SK-N-SH (cell line): ENCODE measurements at regions of chr17 and their contacts with region 1.

Region 1: GRCh38 chr17:58417300-58418092 is at the start of gene RNF43:
- DNase-seq: peak; percentile 90
- H3K4me3 ChIP-seq: peak within 1 kb of the TSS; percentile 33 to 50
- H3K27ac ChIP-seq: no peak within 1 kb of the TSS
- H3K4me1 ChIP-seq: peaks cover 0 to 6% of the 10 kb centered on the region in 2 experiments; a peak in 2 of 4 replicates
- H3K27me3 ChIP-seq: peaks cover 20% of the 10 kb centered on the region
- CTCF ChIP-seq: peak; percentile 79
- EP300 ChIP-seq: no peak
- RAD21 ChIP-seq: peak; percentile 87
- polyA plus RNA-seq, gene RNF43: not detected in 2 replicates

Region 2: GRCh38 chr17:58200017-58200633 is 217.4 kb before region 1 on chr17:
- CTCF ChIA-PET with region 1: interaction called, 14 read pairs
- POLR2A ChIA-PET with region 1: no interaction called
- DNase-seq: peak; percentile 89
- H3K4me3 ChIP-seq: peak overlapping the region in 1 of 2 experiments; percentile 11; a peak in 2 of 4 replicates
- H3K27ac ChIP-seq: no peak overlapping the region
- H3K4me1 ChIP-seq: peaks cover 0 to 4% of the 10 kb centered on the region in 2 experiments; a peak in 1 of 4 replicates
- H3K27me3 ChIP-seq: peaks cover 34% of the 10 kb centered on the region
- CTCF ChIP-seq: peak; percentile 76
- EP300 ChIP-seq: no peak
- RAD21 ChIP-seq: peak; percentile 61

Region 3: DNA sequence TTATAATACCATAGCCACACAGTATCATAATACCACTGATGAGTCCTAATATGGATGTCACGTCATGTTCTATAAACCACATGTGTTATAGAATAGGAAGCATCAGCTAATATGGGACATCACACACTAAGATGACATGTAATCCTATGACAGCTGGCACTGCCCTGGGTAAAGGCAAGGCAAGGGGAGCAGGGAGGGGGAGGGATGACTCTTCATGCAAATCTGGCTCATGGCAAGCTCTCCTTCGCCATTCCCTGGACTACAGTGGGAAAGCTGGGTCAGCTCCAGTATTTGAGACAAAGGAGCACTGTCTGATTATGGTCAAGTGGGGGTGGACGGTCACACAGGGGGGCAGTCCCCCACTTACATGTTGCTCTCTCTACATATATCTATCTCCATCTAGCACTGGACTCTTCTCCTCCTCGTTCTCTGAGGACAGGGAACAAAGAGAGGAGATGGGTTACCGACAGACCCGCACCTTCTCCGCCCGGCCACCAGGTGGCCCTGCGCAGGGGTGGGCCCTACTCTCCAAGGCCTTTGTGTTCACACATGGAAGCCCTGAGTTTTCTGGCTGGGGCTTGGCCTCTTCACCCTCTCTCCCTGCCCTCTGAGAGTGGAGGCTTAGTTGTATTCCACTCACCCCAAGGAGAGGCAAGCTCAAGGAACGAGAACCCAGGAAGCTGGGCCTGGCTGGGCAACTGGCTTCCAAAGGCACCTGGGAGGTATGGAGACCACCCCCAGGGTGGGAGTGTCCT is 113.3 kb before region 1 on chr17:
- CTCF ChIA-PET with region 1: interaction called, 22 read pairs
- POLR2A ChIA-PET with region 1: no interaction called
- DNase-seq: peak; percentile 93
- H3K4me3 ChIP-seq: no peak overlapping the region
- H3K27ac ChIP-seq: no peak overlapping the region
- H3K4me1 ChIP-seq: peaks cover 0 to 3% of the 10 kb centered on the region in 2 experiments; a peak in 1 of 4 replicates
- H3K27me3 ChIP-seq: peaks cover 11% of the 10 kb centered on the region; the same call in 1 of the 2 replicates
- CTCF ChIP-seq: peak; percentile 77
- EP300 ChIP-seq: no peak
- RAD21 ChIP-seq: peak; percentile 61

Region 4: DNA sequence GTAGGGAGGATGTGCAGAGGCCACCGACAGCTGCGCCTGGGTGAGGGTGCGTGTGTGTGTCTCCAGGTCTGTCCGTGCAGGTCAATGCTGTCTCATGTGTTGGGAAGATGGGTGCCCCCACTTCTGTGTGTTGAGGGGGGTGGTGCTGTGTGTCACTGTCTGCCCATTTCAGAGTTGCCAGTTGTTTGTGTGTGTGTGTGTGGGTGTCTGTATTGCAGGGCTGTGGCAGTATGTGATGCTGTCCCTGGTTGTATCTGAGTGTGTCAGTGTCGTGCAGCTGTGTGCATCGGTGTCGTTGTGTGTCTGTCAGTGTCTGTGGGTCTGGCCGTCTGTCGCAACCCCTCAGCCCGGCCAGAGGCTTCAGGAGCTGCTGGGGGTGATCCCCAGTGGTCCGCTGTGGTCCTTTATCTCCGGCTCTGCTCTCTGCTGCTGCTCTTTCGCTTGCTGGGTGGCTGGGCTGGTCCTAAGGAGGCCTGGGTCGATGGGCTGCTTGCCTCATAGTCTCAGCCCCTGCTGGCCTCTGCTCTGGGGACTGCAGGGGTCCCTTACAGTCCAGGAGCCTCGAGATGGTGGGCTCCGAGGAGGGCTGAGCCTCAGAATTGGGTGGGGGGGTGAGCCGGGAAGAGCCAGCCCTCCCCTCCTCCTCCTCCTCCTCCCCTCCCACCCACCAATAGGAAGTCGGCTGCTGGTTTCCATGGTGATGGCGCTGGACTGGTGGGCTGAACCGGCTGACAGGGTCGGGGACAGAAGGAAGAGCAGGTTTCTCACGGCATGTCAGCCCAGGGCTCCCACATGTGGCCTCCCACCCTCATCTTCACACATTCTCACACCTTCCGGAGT is 89.1 kb before region 1 on chr17 and contains the start of gene TSPOAP1:
- CTCF ChIA-PET with region 1: interaction called, 16 read pairs
- POLR2A ChIA-PET with region 1: no interaction called
- DNase-seq: peak; percentile 95
- H3K4me3 ChIP-seq: peak within 1 kb of the TSS in 1 of 2 experiments; percentile 23; a peak in 1 of 4 replicates
- H3K27ac ChIP-seq: peak within 1 kb of the TSS in 1 of 2 experiments; percentile 7; a peak in 1 of 4 replicates
- H3K4me1 ChIP-seq: peaks cover 0 to 35% of the 10 kb centered on the region in 2 experiments; a peak in 1 of 4 replicates
- H3K27me3 ChIP-seq: peaks cover 21% of the 10 kb centered on the region; the same call in 1 of the 2 replicates
- CTCF ChIP-seq: no peak
- EP300 ChIP-seq: no peak
- RAD21 ChIP-seq: no peak
- polyA plus RNA-seq, gene TSPOAP1: 0.79 and 1.9 TPM in 2 replicates

Region 5: DNA sequence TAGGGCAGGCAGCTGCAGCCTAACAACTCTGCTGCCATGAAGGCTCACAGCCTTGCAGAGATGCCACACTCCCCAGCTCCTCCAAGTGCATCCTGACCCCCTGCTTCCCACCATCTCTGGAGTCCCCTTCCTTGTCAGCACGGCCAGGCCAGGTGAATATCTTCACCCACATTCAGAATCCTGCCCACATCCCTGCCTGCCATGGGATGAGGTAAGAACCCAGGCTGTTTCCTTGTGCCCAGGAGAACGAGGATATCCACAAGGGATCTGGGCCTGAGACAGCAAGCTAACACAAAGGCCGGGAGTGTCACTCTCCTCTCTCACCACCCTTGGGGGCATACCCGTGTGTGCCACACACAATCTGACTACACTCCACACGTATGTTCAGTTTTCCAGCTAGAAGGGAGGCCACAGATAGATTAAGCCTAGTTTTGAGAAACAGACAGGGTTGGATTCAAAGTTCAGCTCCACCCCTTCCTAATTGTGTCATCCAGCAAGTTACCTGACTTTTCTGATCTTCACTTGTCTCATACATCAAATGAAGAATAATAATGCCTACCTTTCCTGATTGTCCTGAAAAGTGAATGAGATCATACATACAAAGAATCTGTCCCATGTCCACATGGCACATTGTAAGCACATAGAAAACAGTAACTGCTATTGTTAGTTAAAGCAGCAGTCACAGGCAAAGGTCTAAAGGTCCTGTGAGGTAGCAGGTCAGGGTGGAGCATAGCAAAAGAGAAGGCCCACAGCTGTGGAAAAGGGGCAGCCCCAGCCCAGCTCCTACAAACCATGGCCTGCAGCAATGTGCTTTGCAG is 48.1 kb before region 1 on chr17:
- CTCF ChIA-PET with region 1: interaction called, 21 read pairs
- POLR2A ChIA-PET with region 1: no interaction called
- DNase-seq: no peak
- H3K4me3 ChIP-seq: no peak overlapping the region
- H3K27ac ChIP-seq: no peak overlapping the region
- H3K4me1 ChIP-seq: no peaks in the 10 kb centered on the region
- H3K27me3 ChIP-seq: no peaks in the 10 kb centered on the region; the same call in 1 of the 2 replicates
- CTCF ChIP-seq: no peak
- EP300 ChIP-seq: no peak
- RAD21 ChIP-seq: no peak

Region 6: DNA sequence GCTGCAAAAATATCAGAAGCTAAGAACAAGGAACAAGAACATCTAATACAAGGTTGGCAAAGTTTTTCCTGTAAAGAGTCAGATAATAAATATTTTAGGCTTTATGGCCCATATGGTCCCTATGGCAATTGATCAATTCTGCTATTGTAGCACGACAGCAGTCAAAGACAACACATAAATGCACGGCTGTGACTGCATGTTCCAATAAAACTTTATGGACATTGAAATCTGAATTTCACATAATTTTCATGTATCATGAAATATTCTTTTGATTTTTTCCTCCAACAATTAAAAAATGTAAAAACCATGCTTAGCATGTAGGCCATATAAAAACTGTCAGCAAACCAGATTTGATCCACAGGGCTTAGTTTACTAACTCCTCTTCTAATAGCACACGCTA is 10.3 kb after region 1 on chr17:
- CTCF ChIA-PET with region 1: interaction called, 44 read pairs
- POLR2A ChIA-PET with region 1: no interaction called
- DNase-seq: no peak
- H3K4me3 ChIP-seq: no peak overlapping the region
- H3K27ac ChIP-seq: no peak overlapping the region
- H3K4me1 ChIP-seq: no peaks in the 10 kb centered on the region
- H3K27me3 ChIP-seq: peaks cover 4% of the 10 kb centered on the region; the same call in 1 of the 2 replicates
- CTCF ChIP-seq: no peak
- EP300 ChIP-seq: no peak
- RAD21 ChIP-seq: no peak

Region 7: DNA sequence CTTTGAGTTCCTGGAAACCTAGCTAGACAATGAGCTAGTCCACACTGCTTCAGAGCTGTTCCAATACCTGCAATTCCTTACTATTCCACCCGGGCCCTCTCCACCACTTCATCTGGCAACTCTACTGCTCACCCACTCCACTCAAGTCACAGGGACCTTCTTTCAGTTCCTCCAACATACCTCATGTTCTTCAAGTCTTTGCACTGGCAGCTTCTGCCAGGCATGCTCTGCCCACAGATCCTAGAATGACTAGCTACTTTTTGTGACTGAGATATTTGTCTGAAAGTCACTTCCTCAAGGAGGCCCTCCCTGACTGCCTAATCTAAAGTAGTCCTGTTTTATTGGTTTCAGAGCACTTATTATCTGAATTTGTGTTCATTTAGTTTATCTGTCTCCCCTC is 188.0 kb after region 1 on chr17:
- CTCF ChIA-PET with region 1: no interaction called
- POLR2A ChIA-PET with region 1: no interaction called
- DNase-seq: no peak
- H3K4me3 ChIP-seq: no peak overlapping the region
- H3K27ac ChIP-seq: no peak overlapping the region
- H3K4me1 ChIP-seq: no peaks in the 10 kb centered on the region; a peak in 1 of 4 replicates
- H3K27me3 ChIP-seq: no peaks in the 10 kb centered on the region
- CTCF ChIP-seq: no peak
- EP300 ChIP-seq: no peak
- RAD21 ChIP-seq: no peak

Region 8: GRCh38 chr17:58615768-58616659 is 198.5 kb after region 1 on chr17:
- CTCF ChIA-PET with region 1: no interaction called
- POLR2A ChIA-PET with region 1: no interaction called
- DNase-seq: no peak
- H3K4me3 ChIP-seq: no peak overlapping the region
- H3K27ac ChIP-seq: no peak overlapping the region
- H3K4me1 ChIP-seq: no peaks in the 10 kb centered on the region
- H3K27me3 ChIP-seq: peaks cover 3% of the 10 kb centered on the region
- CTCF ChIP-seq: no peak
- EP300 ChIP-seq: no peak
- RAD21 ChIP-seq: no peak